Prostate gland (tissue), 2 donors: ENCODE measurements at regions of chr18 and their contacts with region 1.

Region 1: DNA sequence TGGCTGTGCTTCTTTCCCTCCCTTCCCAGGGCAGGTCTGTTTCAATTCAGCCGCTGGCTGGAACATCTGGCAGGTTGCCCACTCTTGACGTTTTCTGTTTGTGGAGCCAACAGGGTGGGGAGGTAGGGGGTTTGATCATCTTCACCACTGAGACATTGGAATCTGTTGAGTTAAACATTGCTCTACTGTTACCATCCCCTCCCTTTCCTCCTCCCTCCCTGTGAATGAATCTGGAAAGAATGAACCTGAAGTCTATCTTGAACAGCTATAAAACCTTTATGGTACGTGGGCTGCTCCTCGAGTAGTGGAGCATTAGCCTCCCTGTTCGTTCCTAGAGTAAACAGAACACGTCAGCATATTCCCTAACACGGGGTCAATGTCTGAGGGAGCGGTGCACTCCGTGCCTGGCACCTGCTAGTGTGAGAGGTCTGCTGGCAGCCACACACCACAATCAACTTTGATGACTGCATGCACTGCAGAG is 249.9 kb upstream of the RBBP8 start:
- DNase-seq: peak; percentile 27
- H3K4me3 ChIP-seq: no peak overlapping the region
- H3K27ac ChIP-seq: no peak overlapping the region
- H3K4me1 ChIP-seq: no peaks in the 10 kb centered on the region
- H3K27me3 ChIP-seq: no peaks in the 10 kb centered on the region
- CTCF ChIP-seq: no peak
- POLR2A ChIP-seq: no peak

Region 2: GRCh38 chr18:22609642-22610041 is 73.6 kb before region 1 on chr18:
- intact Hi-C with region 1: loop called (anchors 10 kb)
- DNase-seq: no peak
- H3K4me3 ChIP-seq: no peak overlapping the region
- H3K27ac ChIP-seq: no peak overlapping the region
- H3K4me1 ChIP-seq: peaks cover 2% of the 10 kb centered on the region
- H3K27me3 ChIP-seq: no peaks in the 10 kb centered on the region
- CTCF ChIP-seq: no peak
- POLR2A ChIP-seq: no peak

Region 3: GRCh38 chr18:22765896-22766295 is 82.7 kb after region 1 on chr18:
- intact Hi-C with region 1: loop called (anchors 10 kb)
- DNase-seq: no peak
- H3K4me3 ChIP-seq: no peak overlapping the region
- H3K27ac ChIP-seq: no peak overlapping the region
- H3K4me1 ChIP-seq: no peaks in the 10 kb centered on the region
- H3K27me3 ChIP-seq: no peaks in the 10 kb centered on the region
- CTCF ChIP-seq: no peak
- POLR2A ChIP-seq: no peak